Activated T-helper 1 cell treated with anti-CD3 and anti-CD28 coated beads, Interleukin-12 subunit alpha, Interleukin-12 subunit beta, Interleukin-2, Interleukin-4 antibody, amounts not matched to agents 30 ng/mL and 10 ng/mL and 1 ng/mL, durations not matched to agents 14 hours and 24 hours and 36 hours (primary cell): ENCODE measurements at regions of chr12 and their contacts with region 1.

Region 1: DNA sequence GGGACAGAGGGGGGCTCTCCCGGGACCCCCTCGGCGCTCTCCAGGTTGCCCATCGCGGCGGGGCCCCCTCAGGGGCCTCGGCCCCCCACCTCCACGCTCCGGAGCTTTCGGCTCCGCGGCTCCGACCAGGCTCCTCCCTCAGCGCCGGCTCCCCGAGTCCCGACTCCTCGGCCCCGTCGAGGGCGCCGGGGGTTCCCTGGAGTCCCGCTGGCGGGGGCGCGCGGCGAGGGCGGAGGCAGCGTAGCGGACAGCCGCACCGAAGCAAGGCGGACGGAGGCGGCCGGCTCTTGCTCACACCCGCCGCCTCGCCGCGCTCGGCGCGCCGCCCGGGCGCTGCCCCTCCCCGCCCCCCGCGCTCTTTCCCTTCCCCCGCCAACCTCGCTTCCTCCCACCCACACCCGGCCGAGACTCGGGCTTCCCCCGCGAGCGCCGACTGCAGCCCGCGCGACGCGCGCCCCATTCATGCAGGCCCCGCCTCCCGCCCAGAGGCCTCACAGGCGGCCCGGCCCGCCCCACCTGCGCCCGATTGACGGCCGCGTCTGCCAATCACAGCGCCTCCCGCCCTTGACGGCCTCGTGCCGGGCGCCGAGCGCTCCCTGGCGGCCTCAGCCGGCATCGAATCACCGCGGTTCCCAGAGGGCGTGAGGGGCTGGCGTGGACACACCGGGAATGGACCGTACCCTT is at the start of gene FMNL3:
- DNase-seq: peak; percentile 98
- H3K4me3 Mint-ChIP-seq: peak within 1 kb of the TSS; percentile 96
- H3K27ac Mint-ChIP-seq: peak within 1 kb of the TSS; percentile 89
- H3K4me1 Mint-ChIP-seq: peaks cover 48% of the 10 kb centered on the region
- H3K27me3 Mint-ChIP-seq: peaks cover 20% of the 10 kb centered on the region
- total RNA-seq, gene FMNL3: 43.0 and 46.1 TPM in 2 replicates

Region 2: GRCh38 chr12:49636979-49637755 is 70.1 kb before region 1 on chr12:
- intact Hi-C with region 1: loop called (anchors 1 kb)
- DNase-seq: peak; percentile 54
- H3K4me3 Mint-ChIP-seq: no peak overlapping the region
- H3K27ac Mint-ChIP-seq: peak overlapping the region; percentile 24
- H3K4me1 Mint-ChIP-seq: peaks cover 11% of the 10 kb centered on the region
- H3K27me3 Mint-ChIP-seq: no peaks in the 10 kb centered on the region

Region 3: DNA sequence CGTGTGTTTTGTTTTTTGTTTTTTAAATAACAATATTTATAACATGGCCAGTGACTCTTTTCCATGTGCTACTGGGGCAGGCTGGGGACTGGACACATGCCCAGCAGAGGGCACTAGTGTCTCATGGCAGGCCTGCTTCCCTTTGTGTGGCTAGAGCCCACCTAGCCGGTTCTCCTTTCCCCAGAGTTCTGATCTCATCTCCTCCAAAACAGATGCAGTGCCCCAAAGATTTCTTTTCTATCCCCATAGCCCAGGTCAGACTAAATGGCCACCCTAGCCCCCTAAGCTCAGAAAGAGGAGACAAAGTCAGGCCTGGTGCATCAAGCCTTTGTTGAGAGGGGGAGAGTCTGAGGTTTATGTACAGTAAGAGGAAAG is 62.7 kb before region 1 on chr12:
- intact Hi-C with region 1: loop called (anchors 1 kb)
- DNase-seq: peak; percentile 71
- H3K4me3 Mint-ChIP-seq: no peak overlapping the region
- H3K27ac Mint-ChIP-seq: peak overlapping the region; percentile 82
- H3K4me1 Mint-ChIP-seq: peaks cover 26% of the 10 kb centered on the region
- H3K27me3 Mint-ChIP-seq: no peaks in the 10 kb centered on the region

Region 4: DNA sequence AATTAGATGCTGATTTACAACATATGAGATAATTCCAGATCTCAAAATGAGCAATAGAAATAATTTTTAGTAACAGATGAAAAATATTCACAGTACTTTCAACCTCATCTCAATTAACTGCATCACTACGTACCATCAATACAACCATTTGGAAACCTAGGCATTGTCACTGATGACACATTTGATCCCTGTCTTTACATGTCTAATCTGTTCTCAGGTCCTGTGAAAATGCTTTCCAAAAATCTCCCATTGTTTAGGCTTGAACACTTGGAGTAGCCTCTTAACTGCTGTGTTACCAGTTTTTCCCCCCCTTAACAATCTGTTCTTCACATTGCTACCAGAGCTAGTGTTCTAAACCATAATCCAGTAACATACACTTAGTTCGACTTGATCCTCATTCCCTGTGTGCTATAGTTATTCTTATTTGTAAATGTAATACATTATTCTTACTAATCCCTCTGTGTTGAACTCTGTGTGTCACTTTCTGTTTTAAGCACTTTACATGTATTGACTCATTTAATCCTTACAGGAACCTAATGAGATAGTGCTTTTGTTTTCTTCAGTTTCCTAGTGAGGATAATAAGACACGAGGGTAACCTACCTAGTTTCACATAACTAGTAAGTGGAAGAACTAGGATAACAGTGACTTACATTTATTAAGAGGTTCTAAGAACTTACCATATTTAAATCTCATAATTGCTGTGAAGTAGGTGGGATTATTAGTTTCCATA is 735.1 kb after region 1 on chr12:
- intact Hi-C with region 1: no loop called
- DNase-seq: no peak
- H3K4me3 Mint-ChIP-seq: no peak overlapping the region
- H3K27ac Mint-ChIP-seq: peak overlapping the region; percentile 75
- H3K4me1 Mint-ChIP-seq: peaks cover 15% of the 10 kb centered on the region
- H3K27me3 Mint-ChIP-seq: no peaks in the 10 kb centered on the region